Endothelial cell of umbilical vein (primary cell): ENCODE measurements at regions of chr1 and their contacts with region 1.

Region 1: DNA sequence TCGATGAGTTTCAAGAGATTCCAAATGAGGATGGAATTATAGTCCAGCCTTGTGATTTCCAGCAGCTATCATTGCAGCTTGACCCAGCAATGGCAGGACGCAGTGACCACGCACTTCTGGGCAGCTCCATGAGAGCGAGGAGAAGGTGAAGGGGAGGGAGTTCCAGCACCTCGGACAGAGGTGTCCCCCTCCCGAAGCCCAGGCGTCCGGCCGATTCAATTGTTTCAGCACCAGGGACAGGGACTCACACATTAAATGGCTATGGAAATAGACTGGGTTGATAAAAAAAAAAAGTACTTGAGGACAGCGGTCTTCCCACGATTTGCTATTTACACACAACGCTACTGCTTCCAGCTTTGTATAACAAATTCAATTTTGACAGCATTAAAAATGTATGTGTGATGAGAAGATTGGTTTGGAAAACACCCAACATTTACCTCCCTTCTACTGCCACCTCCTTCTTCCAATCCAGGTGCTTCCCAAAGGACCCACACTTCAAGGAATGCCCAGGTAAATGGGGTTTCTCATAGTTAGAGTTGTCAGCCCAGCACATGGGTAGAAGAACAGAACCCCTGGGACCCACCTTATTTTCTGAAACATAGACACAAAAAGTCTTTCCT is 71.8 kb downstream of the DISP3 start:
- DNase-seq: peak; percentile 78
- H3K4me3 ChIP-seq: no peak overlapping the region
- H3K27ac ChIP-seq: no peak overlapping the region
- H3K4me1 ChIP-seq: no peaks in the 10 kb centered on the region
- H3K27me3 ChIP-seq: no peaks in the 10 kb centered on the region
- CTCF ChIP-seq: no peak
- POLR2A ChIP-seq: no peak

Region 2: DNA sequence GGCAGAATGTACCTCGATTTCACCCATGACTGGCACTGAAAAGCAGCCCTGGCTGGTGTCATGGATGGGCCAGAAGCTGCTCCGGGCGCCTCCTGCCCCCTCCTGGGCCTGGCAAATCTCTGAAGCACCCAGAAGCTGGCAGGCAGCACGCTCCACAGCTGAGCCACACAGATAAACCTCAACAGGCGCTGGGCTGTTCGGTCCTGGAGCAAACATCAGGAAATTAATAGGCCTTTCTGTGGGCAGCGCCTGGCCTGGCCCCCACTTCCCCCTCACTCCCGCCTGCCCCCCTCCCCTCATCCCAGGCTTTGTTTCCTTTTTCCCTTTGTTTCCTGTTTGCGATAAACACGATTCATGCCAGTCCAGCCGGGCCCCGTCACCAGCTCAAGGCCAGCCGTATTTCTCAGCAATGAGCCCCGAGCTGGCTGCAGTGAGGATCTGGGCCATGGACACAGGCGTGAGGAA is 91.9 kb before region 1 on chr1:
- CTCF ChIA-PET with region 1: no interaction called
- POLR2A ChIA-PET with region 1: no interaction called
- dilution Hi-C with region 1: no loop called
- intact Hi-C with region 1: loop called (anchors 5 kb)
- DNase-seq: peak; percentile 67
- H3K4me3 ChIP-seq: no peak overlapping the region
- H3K27ac ChIP-seq: peak overlapping the region; percentile 45
- H3K4me1 ChIP-seq: peaks cover 10% of the 10 kb centered on the region
- H3K27me3 ChIP-seq: no peaks in the 10 kb centered on the region
- CTCF ChIP-seq: no peak
- POLR2A ChIP-seq: no peak

Region 3: GRCh38 chr1:11478571-11479374 is 72.0 kb before region 1 on chr1 and contains the start of gene DISP3:
- CTCF ChIA-PET with region 1: no interaction called
- POLR2A ChIA-PET with region 1: no interaction called
- dilution Hi-C with region 1: no loop called
- intact Hi-C with region 1: loop called (anchors 5 kb)
- DNase-seq: peak; percentile 56
- H3K4me3 ChIP-seq: peak within 1 kb of the TSS; percentile 3 to 53 (median 3)
- H3K27ac ChIP-seq: peak within 1 kb of the TSS; percentile 55
- H3K4me1 ChIP-seq: peaks cover 4% of the 10 kb centered on the region
- H3K27me3 ChIP-seq: peaks cover 3 to 8% of the 10 kb centered on the region in 2 experiments
- CTCF ChIP-seq: peak; percentile 84 to 86
- POLR2A ChIP-seq: no peak
- total RNA-seq, gene DISP3: 0.49 and 0.51 TPM in 2 replicates

Region 4: GRCh38 chr1:11522400-11523235 is 28.2 kb before region 1 on chr1:
- CTCF ChIA-PET with region 1: no interaction called
- POLR2A ChIA-PET with region 1: no interaction called
- dilution Hi-C with region 1: no loop called
- intact Hi-C with region 1: no loop called
- DNase-seq: no peak
- H3K4me3 ChIP-seq: no peak overlapping the region
- H3K27ac ChIP-seq: no peak overlapping the region
- H3K4me1 ChIP-seq: no peaks in the 10 kb centered on the region
- H3K27me3 ChIP-seq: no peaks in the 10 kb centered on the region
- CTCF ChIP-seq: no peak
- POLR2A ChIP-seq: no peak

Region 5: GRCh38 chr1:11634365-11635192 is 83.8 kb after region 1 on chr1:
- CTCF ChIA-PET with region 1: no interaction called
- POLR2A ChIA-PET with region 1: no interaction called
- dilution Hi-C with region 1: no loop called
- intact Hi-C with region 1: loop called (anchors 5 kb)
- DNase-seq: no peak
- H3K4me3 ChIP-seq: no peak overlapping the region
- H3K27ac ChIP-seq: no peak overlapping the region
- H3K4me1 ChIP-seq: no peaks in the 10 kb centered on the region
- H3K27me3 ChIP-seq: no peaks in the 10 kb centered on the region
- CTCF ChIP-seq: no peak
- POLR2A ChIP-seq: no peak